RWPE1 (cell line): ENCODE measurements at regions of chr9 and their contacts with region 1.

Region 1: DNA sequence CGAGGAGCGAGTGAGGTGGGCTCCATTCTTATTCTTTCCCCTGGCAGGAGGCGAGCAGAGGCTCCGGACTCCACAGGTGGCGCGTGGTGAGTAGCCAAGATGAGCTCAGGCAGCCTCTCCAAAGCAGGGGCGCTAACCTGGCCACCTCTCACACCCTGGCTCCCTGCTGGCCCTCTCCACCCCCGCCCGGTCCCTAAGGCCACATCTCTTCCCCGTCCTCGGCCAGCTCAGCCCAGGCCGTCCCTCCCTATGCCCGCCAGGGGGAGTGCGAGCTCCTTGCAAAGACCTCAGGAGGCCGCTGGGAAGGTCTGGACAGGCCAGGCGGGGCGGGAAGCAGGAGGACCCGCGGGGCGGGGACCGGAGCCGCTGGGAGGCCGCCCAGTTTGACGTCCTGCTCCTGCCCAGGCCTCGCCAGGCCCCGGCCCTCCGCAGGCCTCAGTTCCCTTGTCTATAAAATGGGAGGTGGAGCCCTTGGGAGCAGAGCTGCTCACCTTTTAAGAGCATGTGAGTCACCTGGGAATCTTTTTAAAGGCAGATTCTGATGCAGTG is 46.3 kb upstream of the GGTA1 start:
- DNase-seq: peak; percentile 95
- H3K27ac ChIP-seq: no peak overlapping the region; the same call in 1 of the 2 replicates
- CTCF ChIP-seq: peak; percentile 100

Region 2: DNA sequence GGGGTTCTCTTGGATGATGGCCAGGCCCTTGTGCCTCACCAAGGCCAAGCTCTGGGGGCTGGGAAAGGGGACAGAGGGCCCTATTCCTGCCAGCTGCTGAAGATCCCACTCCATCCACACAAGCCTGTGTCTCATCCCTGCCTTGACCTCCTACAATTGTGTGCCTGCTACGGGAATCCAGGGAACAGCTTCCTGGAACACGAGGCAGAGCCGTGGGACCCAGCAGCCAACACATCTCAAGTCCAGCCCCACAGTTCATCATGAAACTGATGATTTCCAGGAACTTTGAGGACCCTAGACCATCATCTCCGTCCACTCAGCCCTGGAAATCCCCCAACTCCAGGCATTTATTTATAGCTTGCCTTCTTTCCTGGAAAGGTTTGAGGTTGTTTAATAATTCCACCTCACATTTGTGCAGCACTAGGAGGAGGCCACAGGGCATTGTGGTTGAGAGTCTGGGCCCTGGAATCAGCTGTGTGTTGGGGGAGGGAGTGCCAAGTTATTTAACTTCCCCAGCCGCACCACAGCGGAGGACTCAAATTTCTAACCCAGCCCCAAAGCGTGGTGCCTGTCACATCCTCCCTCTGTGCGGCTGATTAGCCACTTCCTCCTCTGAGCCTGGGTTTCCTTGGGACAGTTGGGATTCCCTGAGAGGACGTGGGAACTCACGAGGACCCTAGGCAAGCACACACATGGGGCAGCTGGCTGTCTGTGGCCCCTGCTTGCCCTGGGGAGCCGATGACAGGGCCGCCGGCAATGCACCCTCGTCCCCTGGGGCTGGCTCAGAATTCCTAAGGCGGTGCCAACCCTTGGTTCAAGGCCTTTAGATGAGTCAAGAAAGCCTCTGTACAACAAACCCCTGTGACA is 11.9 kb after region 1 on chr9:
- CTCF ChIA-PET with region 1: interaction called, 22 read pairs
- POLR2A ChIA-PET with region 1: no interaction called
- DNase-seq: peak; percentile 84
- H3K27ac ChIP-seq: peak overlapping the region; percentile 80
- CTCF ChIP-seq: no peak

Region 3: GRCh38 chr9:121573717-121574485 is 28.0 kb after region 1 on chr9:
- CTCF ChIA-PET with region 1: interaction called, 26 read pairs
- POLR2A ChIA-PET with region 1: interaction called, 3 read pairs
- DNase-seq: no peak
- H3K27ac ChIP-seq: no peak overlapping the region
- CTCF ChIP-seq: no peak

Region 4: GRCh38 chr9:121598965-121599871 is 53.3 kb after region 1 on chr9:
- CTCF ChIA-PET with region 1: interaction called, 13 read pairs
- POLR2A ChIA-PET with region 1: no interaction called
- DNase-seq: peak; percentile 86
- H3K27ac ChIP-seq: peak overlapping the region; percentile 88
- CTCF ChIP-seq: no peak

Region 5: DNA sequence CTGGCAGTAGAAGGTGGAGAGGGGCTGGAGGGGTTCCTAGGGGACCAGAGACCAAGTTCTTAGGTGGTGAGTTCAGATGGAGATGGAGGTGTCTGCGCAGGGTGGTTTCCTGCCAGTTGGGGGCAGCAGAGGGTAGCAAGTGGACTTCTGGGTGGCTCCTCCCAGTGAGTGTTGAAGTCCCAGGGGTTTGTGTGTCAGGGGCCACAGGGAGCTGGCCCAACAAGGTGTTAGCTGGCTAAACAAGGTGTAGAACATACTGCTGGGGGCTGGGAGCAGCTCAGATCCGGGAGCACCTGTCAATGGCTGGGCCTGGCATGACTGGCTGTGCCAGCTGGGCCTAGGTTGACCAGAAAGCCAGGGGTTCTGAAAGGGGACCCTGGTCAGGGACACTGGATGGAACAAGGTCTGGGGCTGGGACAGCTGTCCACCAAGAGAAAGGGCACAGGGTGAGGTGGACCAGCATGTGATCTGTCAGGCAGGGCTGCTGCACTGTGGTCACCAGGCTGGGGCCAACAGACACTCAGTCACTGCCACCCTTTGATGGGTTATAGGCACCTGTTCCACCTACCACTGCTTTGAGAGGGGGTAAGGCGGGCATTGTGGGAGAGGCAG is 141.1 kb after region 1 on chr9:
- CTCF ChIA-PET with region 1: interaction called, 15 read pairs
- POLR2A ChIA-PET with region 1: interaction called, 5 read pairs
- DNase-seq: peak; percentile 89
- H3K27ac ChIP-seq: no peak overlapping the region
- CTCF ChIP-seq: peak; percentile 97

Region 6: DNA sequence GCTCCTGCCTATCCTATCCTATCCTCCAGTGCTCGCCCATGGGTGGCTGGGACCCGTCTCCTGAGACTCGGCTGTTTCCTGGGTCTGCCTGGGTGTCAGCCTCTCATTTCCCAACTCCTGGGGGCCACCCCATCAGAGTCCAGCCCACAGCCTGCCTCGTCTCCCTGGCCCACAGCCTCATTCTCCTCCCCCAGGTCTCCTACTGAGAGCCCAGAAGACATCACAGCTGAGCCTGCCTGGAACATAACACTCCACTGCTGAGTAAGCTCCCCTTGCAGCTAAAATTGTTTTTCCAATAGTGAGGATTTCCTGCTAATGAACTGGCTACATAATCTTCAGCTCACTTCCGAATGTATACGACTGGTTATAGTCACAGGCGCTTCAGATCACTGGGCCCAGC is 451.8 kb after region 1 on chr9:
- CTCF ChIA-PET with region 1: interaction called, 12 read pairs
- POLR2A ChIA-PET with region 1: no interaction called
- DNase-seq: no peak
- H3K27ac ChIP-seq: no peak overlapping the region
- CTCF ChIP-seq: no peak